ENCODE measurements at regions of chr5 and their contacts with region 1.

Region 1: GRCh38 chr5:59062986-59063683 is 480.3 kb downstream of the RAB3C start:
- DNase-seq: no peak
- H3K4me3 ChIP-seq: no peak overlapping the region
- H3K27ac ChIP-seq: no peak overlapping the region
- H3K4me1 ChIP-seq: peaks cover 9% of the 10 kb centered on the region
- H3K27me3 ChIP-seq: no peaks in the 10 kb centered on the region
- CTCF ChIP-seq: no peak

Region 2: DNA sequence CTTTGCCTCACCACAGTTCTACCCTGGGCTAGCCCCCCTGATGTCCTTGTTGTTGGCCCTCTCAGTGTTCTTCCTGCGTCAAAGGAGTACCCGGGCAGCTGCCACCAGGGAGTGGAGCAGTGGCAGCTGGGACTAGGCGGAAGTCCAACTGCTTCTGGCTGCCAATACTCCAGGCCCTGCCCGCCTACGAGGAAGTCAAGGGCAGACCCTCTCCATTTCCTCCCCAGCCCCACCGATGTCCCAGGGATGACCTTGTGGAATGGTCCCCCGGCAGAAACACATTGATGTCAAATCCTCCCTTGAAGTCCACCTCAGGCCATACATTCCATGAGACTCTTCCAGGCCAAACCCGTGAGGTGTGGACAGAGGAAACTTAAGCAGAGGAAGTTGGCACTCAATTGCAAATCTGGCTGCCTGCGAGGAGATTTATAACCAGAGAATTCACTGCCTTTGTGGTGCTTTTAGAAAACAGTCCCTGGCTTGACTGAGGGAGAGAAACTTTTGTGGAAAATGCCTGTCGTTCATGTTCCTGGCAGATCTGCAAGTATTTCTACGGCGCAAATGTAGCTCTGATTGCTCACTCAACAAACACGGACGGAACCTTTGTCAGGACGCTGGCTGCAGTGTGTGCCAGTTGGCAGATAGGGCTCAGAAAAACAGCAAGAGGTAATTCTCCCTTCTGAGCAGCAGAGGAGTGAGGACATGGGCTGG is 140.5 kb before region 1 on chr5:
- CTCF ChIA-PET with region 1: no interaction called
- POLR2A ChIA-PET with region 1: no interaction called
- intact Hi-C with region 1: no loop called
- DNase-seq: no peak
- H3K4me3 ChIP-seq: no peak overlapping the region
- H3K27ac ChIP-seq: no peak overlapping the region
- H3K4me1 ChIP-seq: no peaks in the 10 kb centered on the region
- H3K27me3 ChIP-seq: no peaks in the 10 kb centered on the region
- CTCF ChIP-seq: no peak

Region 3: DNA sequence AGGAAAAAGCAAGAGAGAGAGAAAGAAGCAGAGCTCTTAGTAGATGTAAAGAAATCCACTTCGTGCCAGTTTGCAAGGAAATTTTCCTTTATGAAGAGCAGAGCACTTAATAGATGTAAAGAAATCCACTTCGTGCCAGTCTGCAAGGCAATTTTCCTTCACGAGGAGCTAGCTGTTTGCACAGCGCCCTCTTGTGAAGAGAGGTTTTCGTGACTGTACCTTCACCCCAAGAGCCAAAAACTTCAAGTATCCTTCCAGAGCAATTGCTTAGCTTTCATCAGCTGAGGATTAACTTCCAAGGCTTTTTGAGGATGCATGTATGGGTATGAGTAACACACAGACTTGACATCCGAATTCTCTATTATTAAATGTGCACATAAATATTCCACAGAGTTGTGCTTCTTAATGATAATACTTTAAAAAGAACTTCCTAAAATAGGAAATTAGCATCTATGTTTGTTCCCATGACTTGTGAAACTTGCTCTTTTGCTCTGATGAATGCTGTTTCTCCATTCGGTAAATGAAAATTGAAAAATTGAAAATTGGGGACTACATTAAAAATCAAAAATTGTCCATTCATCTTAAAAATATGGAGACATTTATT is 304.8 kb after region 1 on chr5:
- CTCF ChIA-PET with region 1: no interaction called
- POLR2A ChIA-PET with region 1: interaction called, 15 read pairs
- intact Hi-C with region 1: no loop called
- DNase-seq: peak; percentile 65
- H3K4me3 ChIP-seq: no peak overlapping the region
- H3K27ac ChIP-seq: no peak overlapping the region
- H3K4me1 ChIP-seq: no peaks in the 10 kb centered on the region
- H3K27me3 ChIP-seq: no peaks in the 10 kb centered on the region
- CTCF ChIP-seq: peak; percentile 82

Measured in A673 (cell line).